Stomach (tissue), 19 donors: ENCODE measurements at regions of chr7 and their contacts with region 1.

Region 1: DNA sequence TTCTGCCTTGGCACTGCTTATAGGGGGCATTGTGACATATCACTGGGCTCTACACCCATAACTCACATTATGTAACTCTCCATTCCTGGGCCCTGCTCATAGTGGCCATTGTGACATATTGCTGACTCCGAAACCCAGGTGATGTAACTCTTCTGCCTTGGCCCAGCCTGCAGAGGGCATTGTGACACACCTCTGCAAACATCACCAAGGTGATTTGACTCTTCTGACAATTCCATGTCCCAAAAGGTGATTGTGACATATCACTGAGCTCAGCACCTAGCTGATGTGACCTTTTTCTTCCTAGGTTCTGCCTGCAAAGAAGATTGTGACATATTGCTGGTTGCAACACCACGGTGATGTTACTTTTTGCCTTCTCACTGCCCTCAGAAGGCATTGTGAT is 36.5 kb upstream of the ZNF680 start:
- DNase-seq: no peak
- H3K4me3 ChIP-seq: no peak overlapping the region
- H3K27ac ChIP-seq: no peak overlapping the region
- H3K4me1 ChIP-seq: no peaks in the 10 kb centered on the region
- H3K27me3 ChIP-seq: no peaks in the 10 kb centered on the region
- CTCF ChIP-seq: no peak
- EP300 ChIP-seq: no peak
- POLR2A ChIP-seq: no peak

Region 2: GRCh38 chr7:64485623-64486022 is 113.7 kb before region 1 on chr7:
- intact Hi-C with region 1: loop called (anchors 10 kb)
- DNase-seq: no peak
- H3K4me3 ChIP-seq: no peak overlapping the region
- H3K27ac ChIP-seq: no peak overlapping the region
- H3K4me1 ChIP-seq: no peaks in the 10 kb centered on the region
- H3K27me3 ChIP-seq: no peaks in the 10 kb centered on the region
- CTCF ChIP-seq: no peak
- EP300 ChIP-seq: no peak
- POLR2A ChIP-seq: no peak